HCT116 (cell line): ENCODE measurements at regions of chr19 and their contacts with region 1.

Region 1: DNA sequence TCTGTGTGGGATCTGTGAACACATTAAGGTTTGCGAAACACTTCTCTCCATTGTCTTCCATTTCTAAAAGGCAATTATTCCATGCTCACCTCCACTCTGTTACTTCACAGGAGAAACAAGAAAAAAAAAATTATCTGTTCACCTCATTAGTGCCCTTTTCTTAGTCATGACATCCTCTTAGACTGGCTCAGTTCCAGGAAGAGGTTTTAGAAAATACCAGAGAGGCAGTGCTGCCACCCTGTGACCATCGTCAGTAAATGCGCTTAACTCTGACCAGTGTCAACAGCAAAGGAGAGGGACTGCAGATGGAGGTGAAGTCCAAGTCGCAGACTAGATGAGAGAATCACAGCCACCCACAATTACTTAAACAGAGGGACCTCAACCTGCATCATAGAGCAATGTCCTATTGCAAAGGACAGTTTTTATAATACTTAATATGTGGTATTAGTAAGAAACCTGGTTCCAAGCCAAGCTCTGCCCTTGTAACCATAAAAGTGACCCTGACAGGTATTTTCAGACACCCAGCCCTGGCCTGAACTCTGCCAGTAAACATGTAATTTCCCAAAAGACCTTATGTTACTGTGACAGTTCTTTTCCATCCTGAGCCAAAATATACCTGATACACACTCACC is 19.4 kb downstream of the CEACAM21 start:
- DNase-seq: peak; percentile 74
- ATAC-seq: peak; percentile 75
- H3K4me3 ChIP-seq: no peak overlapping the region
- H3K27ac ChIP-seq: no peak overlapping the region
- H3K4me1 ChIP-seq: no peaks in the 10 kb centered on the region
- H3K27me3 ChIP-seq: peaks cover 16% of the 10 kb centered on the region; the same call in 1 of the 2 replicates
- CTCF ChIP-seq: peak; percentile 61 to 83 (median 78); a peak in 5 of 6 replicates
- POLR2A ChIP-seq: no peak
- RAD21 ChIP-seq: peak; percentile 67

Region 2: GRCh38 chr19:41616792-41617621 is 21.6 kb after region 1 on chr19:
- CTCF ChIA-PET with region 1: interaction called, 3 read pairs
- POLR2A ChIA-PET with region 1: no interaction called
- RAD21 ChIA-PET with region 1: no interaction called
- intact Hi-C with region 1: loop called (anchors 2 kb)
- DNase-seq: no peak
- ATAC-seq: no peak
- H3K4me3 ChIP-seq: no peak overlapping the region
- H3K27ac ChIP-seq: no peak overlapping the region
- H3K4me1 ChIP-seq: no peaks in the 10 kb centered on the region
- H3K27me3 ChIP-seq: peaks cover 31% of the 10 kb centered on the region
- CTCF ChIP-seq: no peak
- POLR2A ChIP-seq: no peak
- RAD21 ChIP-seq: no peak